Left ventricle myocardium superior (tissue), 1 donor: ENCODE measurements at regions of chr9 and their contacts with region 1.

Region 1: GRCh38 chr9:14485366-14485765 is 171.4 kb upstream of the NFIB start:
- DNase-seq: no peak
- ATAC-seq: no peak

Region 2: GRCh38 chr9:14547245-14548060 is 62.1 kb after region 1 on chr9:
- intact Hi-C with region 1: loop called (anchors 10 kb)
- DNase-seq: no peak
- ATAC-seq: no peak